OCI-LY7 (cell line): ENCODE measurements at regions of chr1 and their contacts with region 1.

Region 1: GRCh38 chr1:44217809-44218410 is 4.6 kb downstream of the DMAP1 start:
- DNase-seq: peak; percentile 74
- H3K4me3 ChIP-seq: no peak overlapping the region
- H3K27ac ChIP-seq: no peak overlapping the region
- H3K4me1 ChIP-seq: peaks cover 30% of the 10 kb centered on the region
- CTCF ChIP-seq: peak; percentile 91

Region 2: DNA sequence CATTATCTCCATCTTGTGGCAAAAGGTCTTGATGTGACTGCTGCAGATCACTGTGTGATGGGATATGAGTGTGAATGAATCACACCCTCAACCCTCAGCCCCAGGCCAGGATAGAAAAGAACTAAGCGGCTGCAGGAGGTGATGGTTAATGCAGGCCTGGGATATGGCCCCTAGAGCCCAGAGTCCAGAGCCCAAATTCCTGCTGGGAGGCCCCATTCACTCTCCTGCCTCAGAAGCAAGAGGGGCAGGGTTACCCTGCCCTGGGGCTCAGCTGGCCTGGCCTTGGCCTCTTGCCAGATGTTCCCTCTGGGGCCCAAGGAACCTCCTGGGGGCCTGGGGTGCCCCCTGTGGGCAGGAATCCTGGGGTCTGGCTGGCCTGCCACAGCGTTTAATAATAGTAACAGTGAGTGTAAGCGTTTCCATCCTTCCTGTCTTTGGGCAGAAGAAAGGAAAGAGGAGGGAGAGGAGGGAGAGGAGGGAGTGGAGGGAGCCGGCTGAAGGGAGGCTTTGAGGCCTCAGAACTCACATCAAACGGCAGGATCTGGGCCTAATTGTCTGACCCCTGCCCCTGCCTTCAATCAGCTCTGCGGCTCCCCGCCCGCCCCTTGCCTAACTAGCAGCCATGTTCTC is 21.5 kb after region 1 on chr1:
- CTCF ChIA-PET with region 1: no interaction called
- POLR2A ChIA-PET with region 1: no interaction called
- intact Hi-C with region 1: no loop called
- DNase-seq: no peak
- H3K4me3 ChIP-seq: no peak overlapping the region
- H3K27ac ChIP-seq: no peak overlapping the region
- H3K4me1 ChIP-seq: peaks cover 4% of the 10 kb centered on the region
- CTCF ChIP-seq: no peak

Region 3: GRCh38 chr1:44318097-44319088 is 100.5 kb after region 1 on chr1:
- CTCF ChIA-PET with region 1: no interaction called
- POLR2A ChIA-PET with region 1: no interaction called
- intact Hi-C with region 1: loop called (anchors 1 kb)
- DNase-seq: peak; percentile 58
- H3K4me3 ChIP-seq: no peak overlapping the region
- H3K27ac ChIP-seq: no peak overlapping the region
- H3K4me1 ChIP-seq: no peaks in the 10 kb centered on the region
- CTCF ChIP-seq: peak; percentile 98

Region 4: GRCh38 chr1:44594871-44595746 is 377.2 kb after region 1 on chr1:
- CTCF ChIA-PET with region 1: no interaction called
- POLR2A ChIA-PET with region 1: no interaction called
- intact Hi-C with region 1: loop called (anchors 5 kb)
- DNase-seq: peak; percentile 67
- H3K4me3 ChIP-seq: no peak overlapping the region
- H3K27ac ChIP-seq: no peak overlapping the region
- H3K4me1 ChIP-seq: no peaks in the 10 kb centered on the region
- CTCF ChIP-seq: peak; percentile 98